SK-N-SH (cell line): ENCODE measurements at regions of chr16 and their contacts with region 1.

Region 1: GRCh38 chr16:27235055-27235937 is 32.0 kb downstream of the KDM8 start:
- DNase-seq: peak; percentile 71
- H3K4me3 ChIP-seq: no peak overlapping the region; a peak in 1 of 4 replicates
- H3K27ac ChIP-seq: peak overlapping the region; percentile 57 to 73
- H3K4me1 ChIP-seq: peaks cover 20 to 31% of the 10 kb centered on the region in 2 experiments; a peak in 3 of 4 replicates
- H3K27me3 ChIP-seq: no peaks in the 10 kb centered on the region
- CTCF ChIP-seq: peak; percentile 98
- EP300 ChIP-seq: no peak
- RAD21 ChIP-seq: peak; percentile 76

Region 2: GRCh38 chr16:27164352-27164751 is 70.9 kb before region 1 on chr16:
- CTCF ChIA-PET with region 1: interaction called, 10 read pairs
- POLR2A ChIA-PET with region 1: no interaction called
- DNase-seq: no peak
- H3K4me3 ChIP-seq: no peak overlapping the region
- H3K27ac ChIP-seq: no peak overlapping the region
- H3K4me1 ChIP-seq: peaks cover 0 to 11% of the 10 kb centered on the region in 2 experiments; a peak in 1 of 4 replicates
- H3K27me3 ChIP-seq: no peaks in the 10 kb centered on the region
- CTCF ChIP-seq: no peak
- EP300 ChIP-seq: no peak
- RAD21 ChIP-seq: no peak

Region 3: DNA sequence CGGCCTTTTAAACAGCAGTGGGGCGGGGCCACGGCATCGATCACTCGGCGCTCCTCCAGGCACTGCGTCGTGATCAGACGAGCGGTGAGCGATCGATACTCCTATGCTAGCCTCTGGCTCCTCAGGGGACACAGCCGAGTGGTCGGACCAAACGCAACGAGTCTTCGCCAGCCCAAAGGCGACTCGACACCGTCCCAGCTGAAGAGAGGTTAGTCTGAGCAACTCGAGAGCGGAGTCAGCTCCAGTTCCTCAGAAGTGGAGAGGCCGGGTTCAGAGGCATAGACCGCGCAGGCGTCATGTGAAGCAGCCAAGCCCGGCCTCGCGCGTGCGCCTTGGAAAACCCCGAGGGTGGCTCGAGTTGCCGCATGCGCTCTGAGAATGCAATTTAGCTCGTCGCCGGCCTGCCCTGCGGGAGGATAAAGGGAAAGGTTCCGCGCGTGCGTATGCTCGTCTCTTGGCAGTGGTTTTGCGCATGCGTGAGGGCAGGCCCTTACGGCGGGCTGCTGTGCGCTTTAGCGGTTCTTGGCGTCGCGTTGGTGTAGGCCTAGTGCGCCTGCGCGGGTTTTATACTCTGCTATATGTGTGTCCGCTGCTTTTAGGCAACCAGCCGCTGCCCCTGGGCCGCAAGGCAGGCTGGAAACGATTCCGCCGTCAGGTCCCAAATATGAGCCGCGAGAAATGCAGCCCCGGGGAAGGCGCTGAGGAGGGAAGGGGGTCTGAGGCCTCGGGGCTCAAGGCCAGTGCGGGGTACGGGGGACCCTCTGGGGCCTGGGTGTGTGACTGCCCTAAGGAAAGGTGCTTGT is 31.7 kb before region 1 on chr16 and contains the start of gene KDM8:
- CTCF ChIA-PET with region 1: interaction called, 17 read pairs
- POLR2A ChIA-PET with region 1: no interaction called
- DNase-seq: peak; percentile 97
- H3K4me3 ChIP-seq: peak within 1 kb of the TSS; percentile 81 to 86
- H3K27ac ChIP-seq: peak within 1 kb of the TSS; percentile 97 to 99
- H3K4me1 ChIP-seq: peaks cover 0 to 9% of the 10 kb centered on the region in 2 experiments; a peak in 1 of 4 replicates
- H3K27me3 ChIP-seq: no peaks in the 10 kb centered on the region
- CTCF ChIP-seq: no peak
- EP300 ChIP-seq: no peak
- RAD21 ChIP-seq: no peak
- polyA plus RNA-seq, gene KDM8: 3.3 and 3.9 TPM in 2 replicates

Region 4: GRCh38 chr16:27253526-27253930 is 18.2 kb after region 1 on chr16:
- CTCF ChIA-PET with region 1: interaction called, 18 read pairs
- POLR2A ChIA-PET with region 1: no interaction called
- DNase-seq: no peak
- H3K4me3 ChIP-seq: no peak overlapping the region
- H3K27ac ChIP-seq: peak overlapping the region; percentile 14 to 82; a peak in 3 of 4 replicates
- H3K4me1 ChIP-seq: peaks cover 0 to 18% of the 10 kb centered on the region in 2 experiments; a peak in 2 of 4 replicates
- H3K27me3 ChIP-seq: no peaks in the 10 kb centered on the region
- CTCF ChIP-seq: no peak
- EP300 ChIP-seq: no peak
- RAD21 ChIP-seq: no peak

Region 5: DNA sequence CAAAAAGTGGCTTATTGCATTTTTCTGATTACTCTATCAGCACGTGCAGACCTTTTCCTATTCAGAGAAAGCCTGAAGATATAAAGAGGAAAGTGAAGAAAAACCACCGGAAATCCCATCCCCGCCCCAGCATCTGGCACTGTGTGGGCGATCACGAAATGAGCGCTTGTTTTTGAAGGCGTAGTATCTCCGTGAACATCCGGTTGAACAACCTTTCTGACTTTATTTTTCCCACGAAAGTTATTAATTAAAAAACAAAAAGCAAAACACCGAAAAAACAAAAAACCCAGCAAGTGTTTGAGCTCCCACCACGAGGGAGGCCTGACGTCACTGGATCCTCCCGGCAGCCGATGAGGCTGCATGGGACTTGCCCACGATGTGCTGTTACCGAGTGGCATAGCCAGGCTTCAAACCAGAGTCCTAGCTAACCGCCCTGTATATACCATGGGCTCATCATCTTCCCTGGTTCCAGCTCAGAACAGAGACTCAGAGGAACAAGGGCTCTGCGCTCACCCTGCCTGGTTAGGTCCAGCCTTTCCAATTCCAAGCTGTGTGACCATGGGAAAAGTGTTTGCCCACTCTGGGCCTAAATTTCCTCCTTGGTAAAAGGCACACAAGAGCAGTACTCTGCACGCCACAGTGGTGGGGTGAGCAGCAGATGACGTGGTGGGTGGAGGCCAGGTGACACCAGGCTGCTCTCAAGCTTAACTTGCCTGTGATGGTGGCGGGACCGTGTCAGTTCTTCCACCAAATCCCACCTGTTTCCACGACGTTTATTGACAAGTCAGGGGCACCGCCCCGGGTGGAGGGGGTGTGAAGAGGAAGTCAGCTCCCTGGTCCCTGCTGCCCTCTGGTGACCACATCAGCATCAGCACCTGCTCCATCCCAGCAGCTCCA is 132.4 kb after region 1 on chr16:
- CTCF ChIA-PET with region 1: interaction called, 104 read pairs
- POLR2A ChIA-PET with region 1: interaction called, 5 read pairs
- DNase-seq: peak; percentile 85
- H3K4me3 ChIP-seq: no peak overlapping the region
- H3K27ac ChIP-seq: no peak overlapping the region
- H3K4me1 ChIP-seq: no peaks in the 10 kb centered on the region; a peak in 1 of 4 replicates
- H3K27me3 ChIP-seq: no peaks in the 10 kb centered on the region
- CTCF ChIP-seq: peak; percentile 68
- EP300 ChIP-seq: no peak
- RAD21 ChIP-seq: peak; percentile 81